Aorta (tissue), 5 donors: ENCODE measurements at regions of chr14 and their contacts with region 1.

Region 1: GRCh38 chr14:30194741-30195148 is 267.1 kb upstream of the PRKD1 start:
- DNase-seq: no peak
- ATAC-seq: peak; percentile 58
- H3K4me3 ChIP-seq: no peak overlapping the region
- H3K27ac ChIP-seq: peak overlapping the region in 1 of 2 donors; percentile 98
- H3K4me1 ChIP-seq: peaks cover 0 to 3% of the 10 kb centered on the region in 2 donors
- H3K27me3 ChIP-seq: no peaks in the 10 kb centered on the region

Region 2: GRCh38 chr14:30143627-30144026 is 51.1 kb before region 1 on chr14:
- intact Hi-C with region 1: loop called in 1 of 2 experiments (anchors 5 kb)
- DNase-seq: no peak
- ATAC-seq: no peak
- H3K4me3 ChIP-seq: no peak overlapping the region
- H3K27ac ChIP-seq: no peak overlapping the region
- H3K4me1 ChIP-seq: no peaks in the 10 kb centered on the region
- H3K27me3 ChIP-seq: no peaks in the 10 kb centered on the region